ENCODE measurements at regions of chr4 and their contacts with region 1.

Region 1: DNA sequence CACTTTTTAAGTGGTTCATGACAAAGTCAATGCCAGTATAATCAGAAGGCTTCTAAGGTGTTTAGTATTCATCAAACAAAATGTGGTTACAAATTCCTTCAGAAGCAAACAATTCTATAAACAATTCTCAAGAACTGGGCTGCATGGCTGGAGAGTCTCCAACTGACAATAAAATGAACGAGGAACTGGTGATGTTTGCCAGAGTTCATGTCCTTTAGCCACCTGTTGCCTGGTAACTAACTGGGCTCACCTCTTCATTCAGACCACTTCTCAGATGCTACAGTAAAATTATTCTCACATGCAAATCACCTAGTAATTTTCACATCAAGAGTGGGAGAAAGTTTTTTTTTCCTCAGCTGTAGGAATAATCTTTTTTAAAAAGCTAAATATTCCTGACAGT is 53.3 kb downstream of the CAMK2D start:
- DNase-seq: no peak
- ATAC-seq: no peak
- H3K4me3 ChIP-seq: no peak overlapping the region
- H3K27ac ChIP-seq: no peak overlapping the region
- H3K4me1 ChIP-seq: no peaks in the 10 kb centered on the region
- H3K27me3 ChIP-seq: no peaks in the 10 kb centered on the region

Region 2: GRCh38 chr4:113741956-113742355 is 33.7 kb after region 1 on chr4:
- intact Hi-C with region 1: loop called in 1 of 4 experiments (anchors 2 kb)
- DNase-seq: no peak
- ATAC-seq: no peak
- H3K4me3 ChIP-seq: no peak overlapping the region
- H3K27ac ChIP-seq: no peak overlapping the region
- H3K4me1 ChIP-seq: peaks cover 4% of the 10 kb centered on the region
- H3K27me3 ChIP-seq: no peaks in the 10 kb centered on the region

Region 3: GRCh38 chr4:113756005-113756410 is 47.8 kb after region 1 on chr4:
- intact Hi-C with region 1: loop called in 1 of 4 experiments (anchors 10 kb)
- DNase-seq: no peak
- ATAC-seq: no peak
- H3K4me3 ChIP-seq: peak overlapping the region; percentile 6
- H3K27ac ChIP-seq: no peak overlapping the region
- H3K4me1 ChIP-seq: no peaks in the 10 kb centered on the region
- H3K27me3 ChIP-seq: no peaks in the 10 kb centered on the region

Measured in right cardiac atrium (tissue), 5 donors.